Activated CD4-positive, alpha-beta memory T cell treated with anti-CD3 and anti-CD28 coated beads for 36 hours (primary cell): ENCODE measurements at regions of chr4 and their contacts with region 1.

Region 1: GRCh38 chr4:105135785-105136184 is 10.9 kb upstream of the TET2 start:
- DNase-seq: no peak
- H3K4me3 Mint-ChIP-seq: no peak overlapping the region
- H3K27ac Mint-ChIP-seq: no peak overlapping the region
- H3K4me1 Mint-ChIP-seq: peaks cover 28% of the 10 kb centered on the region
- H3K27me3 Mint-ChIP-seq: no peaks in the 10 kb centered on the region

Region 2: GRCh38 chr4:104966349-104967033 is 169.3 kb before region 1 on chr4:
- CTCF ChIA-PET with region 1: no interaction called
- POLR2A ChIA-PET with region 1: no interaction called
- intact Hi-C with region 1: loop called (anchors 1 kb)
- DNase-seq: peak; percentile 47
- H3K4me3 Mint-ChIP-seq: peak overlapping the region; percentile 48
- H3K27ac Mint-ChIP-seq: peak overlapping the region; percentile 79
- H3K4me1 Mint-ChIP-seq: peaks cover 15% of the 10 kb centered on the region
- H3K27me3 Mint-ChIP-seq: peaks cover 5% of the 10 kb centered on the region

Region 3: DNA sequence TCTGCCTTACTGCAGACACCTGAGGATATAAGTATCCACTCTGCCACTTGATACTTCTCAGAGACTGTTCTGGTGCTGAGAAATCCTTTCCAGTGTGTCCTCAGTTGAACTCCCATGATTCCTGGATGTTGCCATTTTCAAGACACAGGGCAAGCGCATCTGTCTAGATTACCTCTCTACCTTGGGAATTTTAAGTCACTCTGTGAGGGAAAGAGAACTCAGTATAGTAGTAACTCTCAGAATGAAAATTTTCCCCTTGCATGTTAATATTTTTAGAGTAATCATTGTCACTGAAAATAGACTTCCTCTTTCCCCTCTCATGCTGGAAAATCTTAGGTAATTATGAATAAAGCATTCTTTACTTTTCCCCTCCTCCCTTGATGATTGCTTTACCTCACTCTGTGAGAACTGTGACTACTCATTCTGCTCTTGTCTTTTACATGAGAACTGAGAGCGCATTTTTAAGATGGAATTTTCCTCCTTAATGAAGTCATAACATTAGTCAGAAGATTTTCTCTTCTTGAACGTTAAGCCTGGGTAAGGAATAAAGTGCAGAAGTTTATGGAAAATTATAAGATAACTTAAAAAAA is 55.9 kb after region 1 on chr4:
- CTCF ChIA-PET with region 1: interaction called, 4 read pairs
- POLR2A ChIA-PET with region 1: interaction called, 3 read pairs
- intact Hi-C with region 1: loop called (anchors 2 kb)
- DNase-seq: no peak
- H3K4me3 Mint-ChIP-seq: no peak overlapping the region
- H3K27ac Mint-ChIP-seq: peak overlapping the region; percentile 83
- H3K4me1 Mint-ChIP-seq: peaks cover 87% of the 10 kb centered on the region
- H3K27me3 Mint-ChIP-seq: no peaks in the 10 kb centered on the region

Region 4: DNA sequence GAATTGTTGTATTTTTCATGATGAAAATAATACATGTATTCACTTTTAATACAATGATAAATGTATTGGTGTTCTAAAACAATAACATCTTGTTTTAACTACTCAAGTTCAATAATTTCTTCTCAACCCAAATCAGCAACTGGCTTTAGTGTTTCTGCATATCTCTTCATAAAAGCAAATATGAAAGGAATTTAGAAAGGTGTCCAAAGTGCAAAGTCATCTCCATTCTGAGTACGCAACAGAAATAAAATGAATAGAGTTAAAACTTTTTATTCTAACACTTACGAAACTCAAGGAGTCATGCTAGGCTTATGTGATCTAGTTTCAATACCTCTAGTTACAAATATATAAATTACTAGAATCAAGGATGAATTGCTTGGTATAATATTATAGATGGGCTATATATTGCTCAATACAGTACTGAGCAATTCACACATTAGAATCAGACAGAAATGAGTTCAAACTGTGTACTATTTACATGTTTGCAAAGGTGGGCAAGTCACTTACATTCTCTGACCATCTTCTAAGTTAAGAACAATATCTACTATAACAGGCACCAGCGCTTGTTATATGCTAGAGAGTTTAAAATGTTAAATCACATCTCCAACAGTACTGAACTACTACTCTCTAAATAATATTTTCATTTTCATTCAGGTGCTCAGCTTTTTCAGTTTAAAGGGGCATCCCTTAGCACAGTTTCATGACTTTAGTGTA is 286.6 kb after region 1 on chr4:
- CTCF ChIA-PET with region 1: no interaction called
- POLR2A ChIA-PET with region 1: no interaction called
- intact Hi-C with region 1: loop called (anchors 1 kb)
- DNase-seq: no peak
- H3K4me3 Mint-ChIP-seq: no peak overlapping the region
- H3K27ac Mint-ChIP-seq: no peak overlapping the region
- H3K4me1 Mint-ChIP-seq: peaks cover 18% of the 10 kb centered on the region
- H3K27me3 Mint-ChIP-seq: no peaks in the 10 kb centered on the region